Esophagus squamous epithelium (tissue), 5 donors: ENCODE measurements at regions of chr20 and their contacts with region 1.

Region 1: DNA sequence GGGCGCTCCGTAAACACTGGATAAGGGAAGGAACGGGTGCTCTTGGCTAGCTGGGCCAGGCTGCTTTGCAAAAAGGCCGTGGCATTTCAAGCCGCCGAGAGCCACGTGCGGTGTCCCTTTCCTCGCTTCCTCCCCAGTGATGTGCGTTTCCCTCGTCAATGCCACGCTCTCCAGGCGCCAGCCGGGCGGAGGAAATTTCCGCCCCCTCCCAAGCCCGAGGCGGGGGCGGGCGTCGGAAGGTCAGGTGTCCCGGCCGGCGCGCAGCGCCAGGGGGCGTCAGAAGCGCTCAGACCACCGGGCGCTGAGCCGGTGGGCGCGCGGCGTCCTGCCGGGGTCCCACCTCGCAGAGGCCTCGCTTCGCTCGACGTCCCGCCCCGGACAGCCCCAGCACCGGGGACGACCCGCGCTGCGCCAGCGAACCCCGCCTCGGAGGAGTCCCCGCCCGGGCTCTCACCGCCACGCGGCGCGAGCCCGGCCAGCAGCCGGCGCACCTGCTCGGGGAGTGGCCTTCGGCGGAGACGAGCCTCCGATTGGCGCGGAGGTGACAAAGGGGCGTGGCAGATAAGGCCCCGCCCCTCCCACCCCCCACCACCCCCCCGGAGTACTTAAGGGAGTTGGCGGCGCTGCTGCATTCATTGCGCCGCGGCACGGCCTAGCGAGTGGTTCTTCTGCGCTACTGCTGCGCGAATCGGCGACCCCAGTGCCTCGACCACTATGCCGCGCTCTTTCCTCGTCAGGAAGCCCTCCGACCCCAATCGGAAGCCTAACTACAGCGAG is at the start of gene SNAI1:
- DNase-seq: no peak
- H3K4me3 ChIP-seq: peak within 1 kb of the TSS; percentile 26 to 66 (median 44)
- H3K27ac ChIP-seq: peak within 1 kb of the TSS; percentile 53 to 80 (median 64)
- H3K4me1 ChIP-seq: peaks cover 8 to 70% (median 31%) of the 10 kb centered on the region in 3 donors
- H3K27me3 ChIP-seq: peaks cover 0 to 34% (median 3%) of the 10 kb centered on the region in 4 donors
- CTCF ChIP-seq: peak; percentile 39 to 72 (median 56)
- POLR2A ChIP-seq: peak in 2 of 4 donors; percentile 62 to 82
- total RNA-seq, gene SNAI1: 0.44 to 1.3 (median 0.75) TPM in 3 of 4 donors, not detected in the other

Region 2: DNA sequence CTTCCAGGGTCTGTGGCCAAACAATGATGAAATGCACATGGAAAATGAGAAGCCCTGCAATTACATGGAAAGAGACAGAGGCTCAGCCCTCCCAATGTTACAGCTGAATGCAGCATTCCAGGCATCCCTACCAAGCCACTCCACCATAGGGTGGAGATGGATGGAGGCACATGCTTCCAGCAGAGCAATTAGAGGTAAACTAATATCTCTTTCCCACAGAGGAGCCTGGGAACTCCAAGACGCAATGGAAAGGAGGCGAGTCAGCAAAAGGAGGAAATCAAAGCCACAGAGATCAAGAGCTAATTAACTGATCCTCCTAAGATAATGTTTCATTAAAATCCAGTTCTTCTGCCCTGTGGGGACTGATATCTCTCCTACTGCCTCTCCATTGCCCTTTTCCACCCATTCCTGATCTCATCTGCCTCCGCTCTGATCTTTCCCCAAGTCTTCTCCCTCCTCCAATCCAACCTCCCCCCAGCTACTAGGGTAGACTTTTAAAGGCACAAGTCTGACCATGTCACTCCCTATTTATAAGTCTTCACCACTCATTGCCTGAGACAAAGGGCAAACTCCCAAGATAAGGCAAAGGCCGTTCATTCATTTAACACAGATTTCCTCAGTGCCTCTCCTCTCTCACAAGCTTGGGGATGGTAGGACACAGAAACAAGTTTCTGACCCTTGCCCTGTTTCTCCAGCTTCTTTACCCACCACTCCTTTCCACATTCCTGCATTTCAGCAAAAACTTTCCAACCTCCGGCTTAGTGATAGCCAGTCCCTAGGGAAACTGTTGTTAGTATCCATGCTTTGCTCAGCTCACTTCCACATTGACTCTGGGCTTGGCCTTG is 485.8 kb before region 1 on chr20:
- intact Hi-C with region 1: no loop called
- DNase-seq: no peak
- H3K4me3 ChIP-seq: no peak overlapping the region
- H3K27ac ChIP-seq: no peak overlapping the region
- H3K4me1 ChIP-seq: no peaks in the 10 kb centered on the region
- H3K27me3 ChIP-seq: peaks cover 0 to 34% (median 0%) of the 10 kb centered on the region in 4 donors
- CTCF ChIP-seq: no peak
- POLR2A ChIP-seq: no peak

Region 3: DNA sequence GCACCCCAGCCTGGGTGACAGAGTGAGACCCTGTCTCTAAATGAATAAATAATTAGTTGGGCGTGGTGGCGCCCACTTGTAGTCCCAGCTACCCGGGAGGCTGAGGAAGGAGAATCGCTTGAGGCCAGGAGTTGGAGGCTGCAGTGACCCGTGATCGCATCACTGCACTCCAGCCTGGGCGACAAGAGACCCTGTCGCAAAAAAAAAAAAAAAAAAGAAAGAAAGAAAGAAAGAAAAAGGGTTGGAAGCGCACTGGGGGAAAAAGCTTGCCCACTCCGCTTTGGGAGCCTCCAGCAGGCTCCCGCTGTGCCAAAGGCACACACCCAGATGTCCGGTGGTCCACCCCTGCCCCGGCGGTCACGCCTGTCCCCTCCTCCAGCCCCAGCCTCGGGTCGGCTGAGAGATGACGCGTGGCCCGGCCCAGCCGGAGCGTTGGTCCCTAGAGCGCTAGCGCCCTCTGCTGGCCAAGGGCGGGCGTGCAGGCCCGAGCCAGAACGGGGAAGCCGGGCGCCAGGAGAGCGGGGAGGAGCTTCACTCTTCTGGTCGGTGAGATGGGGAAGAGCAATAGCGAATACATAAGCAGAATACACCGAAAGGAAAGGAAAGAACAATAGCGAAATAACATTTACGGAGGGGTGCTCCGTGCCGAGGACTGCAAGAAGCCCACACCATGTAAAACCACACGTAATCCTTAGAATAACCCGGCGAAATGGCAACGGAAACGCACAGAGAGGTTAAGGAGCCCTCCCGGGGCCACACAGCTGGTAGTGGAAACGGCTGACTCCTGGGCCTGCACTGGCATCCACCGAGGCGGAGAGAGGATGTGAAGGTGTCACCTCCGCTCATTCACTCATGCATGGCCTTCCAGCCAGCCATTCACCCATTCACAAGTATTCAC is 88.7 kb after region 1 on chr20:
- intact Hi-C with region 1: loop called (anchors 2 kb)
- DNase-seq: peak; percentile 26
- H3K4me3 ChIP-seq: peak overlapping the region in 3 of 4 donors; percentile 33 to 57 (median 36)
- H3K27ac ChIP-seq: peak overlapping the region in 1 of 4 donors; percentile 30
- H3K4me1 ChIP-seq: peaks cover 3 to 23% (median 9%) of the 10 kb centered on the region in 3 donors
- H3K27me3 ChIP-seq: no peaks in the 10 kb centered on the region
- CTCF ChIP-seq: peak; percentile 98 to 100 (median 100)
- POLR2A ChIP-seq: no peak

Region 4: DNA sequence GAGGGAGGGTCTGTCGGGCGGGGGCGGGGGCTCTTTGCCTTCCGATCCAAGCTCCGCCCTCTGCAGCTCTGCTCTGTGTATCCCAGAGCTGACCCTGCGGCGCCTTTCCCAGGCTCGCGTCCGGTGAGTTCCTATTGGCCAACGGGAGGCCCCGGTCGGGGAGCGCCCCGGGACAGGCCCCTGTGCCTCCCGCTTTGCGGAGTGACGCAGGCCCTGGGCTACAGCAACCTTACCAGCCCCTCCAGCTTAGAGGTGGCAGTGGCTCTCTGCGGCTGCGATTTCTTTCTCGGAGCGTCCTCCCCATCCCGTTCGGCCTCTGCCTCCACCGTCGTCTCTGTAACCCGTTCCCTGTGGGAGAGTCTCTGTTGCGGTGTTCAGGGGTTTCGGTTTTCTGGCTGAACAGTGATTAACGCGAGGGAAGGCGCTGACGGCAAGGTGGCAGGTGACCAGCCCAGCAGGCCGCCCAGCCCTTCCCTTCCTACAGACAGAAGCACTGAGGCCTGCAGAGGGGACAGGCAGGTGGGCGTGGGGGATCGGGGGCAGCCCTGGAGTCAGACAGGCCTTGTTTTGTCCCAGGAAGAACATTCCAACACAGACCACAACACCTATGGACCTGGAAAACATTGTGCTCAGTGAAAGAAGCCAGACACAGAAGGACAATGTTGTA is 189.9 kb after region 1 on chr20:
- intact Hi-C with region 1: loop called (anchors 10 kb)
- DNase-seq: no peak
- H3K4me3 ChIP-seq: peak overlapping the region; percentile 42 to 67 (median 50)
- H3K27ac ChIP-seq: peak overlapping the region; percentile 75 to 86 (median 80)
- H3K4me1 ChIP-seq: peaks cover 2 to 31% (median 9%) of the 10 kb centered on the region in 3 donors
- H3K27me3 ChIP-seq: no peaks in the 10 kb centered on the region
- CTCF ChIP-seq: no peak
- POLR2A ChIP-seq: peak in 2 of 4 donors; percentile 17 to 47